Activated CD4-positive, alpha-beta T cell treated with anti-CD3 and anti-CD28 coated beads for 36 hours (primary cell): ENCODE measurements at regions of chr1 and their contacts with region 1.

Region 1: GRCh38 chr1:67766141-67766978 is 66.9 kb downstream of the GNG12 start:
- DNase-seq: peak; percentile 64
- ATAC-seq: peak; percentile 46
- H3K4me3 Mint-ChIP-seq: no peak overlapping the region
- H3K27ac Mint-ChIP-seq: no peak overlapping the region
- H3K4me1 Mint-ChIP-seq: peaks cover 12% of the 10 kb centered on the region
- H3K27me3 Mint-ChIP-seq: peaks cover 29% of the 10 kb centered on the region

Region 2: DNA sequence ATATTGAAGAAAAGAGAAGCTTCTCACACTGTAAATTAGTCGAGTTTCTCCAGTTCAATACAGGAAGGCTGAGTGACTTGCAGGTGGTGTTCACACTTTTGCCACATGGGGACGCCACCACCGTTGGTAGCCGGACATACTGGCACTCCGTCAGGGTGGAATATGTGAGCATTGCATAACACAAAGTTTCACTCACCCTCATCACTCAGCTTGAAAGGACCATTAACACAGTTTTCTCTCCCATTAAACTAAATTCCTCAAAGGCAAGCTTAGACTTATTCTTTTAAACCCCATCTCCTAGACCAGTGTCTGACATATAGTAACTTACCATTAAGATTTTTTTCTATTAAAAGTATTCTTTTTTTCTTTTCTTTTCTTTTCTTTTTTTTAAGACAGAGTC is 230.9 kb before region 1 on chr1:
- CTCF ChIA-PET with region 1: interaction called, 113 read pairs
- POLR2A ChIA-PET with region 1: no interaction called
- intact Hi-C with region 1: no loop called
- DNase-seq: peak; percentile 83
- ATAC-seq: peak; percentile 79
- H3K4me3 Mint-ChIP-seq: no peak overlapping the region
- H3K27ac Mint-ChIP-seq: no peak overlapping the region
- H3K4me1 Mint-ChIP-seq: no peaks in the 10 kb centered on the region
- H3K27me3 Mint-ChIP-seq: peaks cover 5% of the 10 kb centered on the region

Region 3: GRCh38 chr1:67723620-67724019 is 42.7 kb before region 1 on chr1:
- CTCF ChIA-PET with region 1: no interaction called
- POLR2A ChIA-PET with region 1: no interaction called
- intact Hi-C with region 1: no loop called
- DNase-seq: peak; percentile 38
- ATAC-seq: peak; percentile 93
- H3K4me3 Mint-ChIP-seq: no peak overlapping the region
- H3K27ac Mint-ChIP-seq: no peak overlapping the region
- H3K4me1 Mint-ChIP-seq: peaks cover 12% of the 10 kb centered on the region
- H3K27me3 Mint-ChIP-seq: no peaks in the 10 kb centered on the region

Region 4: GRCh38 chr1:67777440-67777839 is 11.1 kb after region 1 on chr1:
- CTCF ChIA-PET with region 1: interaction called, 24 read pairs
- POLR2A ChIA-PET with region 1: no interaction called
- intact Hi-C with region 1: no loop called
- DNase-seq: no peak
- ATAC-seq: no peak
- H3K4me3 Mint-ChIP-seq: no peak overlapping the region
- H3K27ac Mint-ChIP-seq: no peak overlapping the region
- H3K4me1 Mint-ChIP-seq: no peaks in the 10 kb centered on the region
- H3K27me3 Mint-ChIP-seq: peaks cover 20% of the 10 kb centered on the region

Region 5: DNA sequence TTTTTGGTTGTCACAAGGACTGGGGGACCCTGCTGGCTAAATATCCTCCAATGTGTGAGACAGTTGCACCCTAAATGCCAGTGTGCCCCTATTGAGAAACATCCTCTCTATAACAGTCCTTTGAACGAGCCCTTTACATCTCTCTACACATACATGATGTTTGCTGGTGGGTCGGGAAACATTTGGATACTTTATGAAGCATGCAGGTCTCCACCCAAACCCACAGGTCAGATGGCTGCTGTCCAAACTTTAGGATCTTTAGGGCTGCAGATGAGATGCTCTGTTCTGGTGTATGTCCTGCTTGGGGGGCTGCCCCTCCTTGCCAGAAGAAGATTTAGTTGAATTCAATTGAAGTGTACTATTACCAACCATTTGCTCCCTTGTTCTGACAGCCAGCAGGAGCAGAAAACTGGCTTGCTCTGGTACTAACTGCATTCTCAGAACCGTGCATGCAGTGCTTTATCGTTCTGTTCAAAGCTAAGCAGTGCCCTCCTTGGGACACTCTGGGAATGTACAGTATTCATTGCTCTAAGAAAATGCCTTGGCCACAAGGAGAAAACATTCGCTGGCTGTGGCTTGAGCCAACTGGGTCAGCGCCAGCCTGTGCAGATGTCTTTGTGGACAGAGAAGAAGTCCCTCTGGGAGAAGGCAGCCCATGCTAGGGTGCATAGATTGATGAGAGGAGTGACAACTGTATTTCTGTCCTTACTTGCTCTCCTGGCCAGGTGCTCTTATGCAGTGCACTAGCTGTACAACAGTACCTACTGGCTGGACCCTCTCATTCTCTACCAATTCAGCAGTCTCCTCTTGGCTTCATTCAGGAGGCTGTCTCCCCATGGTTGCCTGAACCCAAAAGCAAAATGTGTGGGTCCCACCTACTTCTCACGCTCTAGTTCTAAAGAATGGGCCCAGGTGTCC is 345.4 kb after region 1 on chr1:
- CTCF ChIA-PET with region 1: interaction called, 4 read pairs
- POLR2A ChIA-PET with region 1: no interaction called
- intact Hi-C with region 1: loop called (anchors 2 to 5 kb)
- DNase-seq: no peak
- ATAC-seq: no peak
- H3K4me3 Mint-ChIP-seq: no peak overlapping the region
- H3K27ac Mint-ChIP-seq: no peak overlapping the region
- H3K4me1 Mint-ChIP-seq: peaks cover 1% of the 10 kb centered on the region
- H3K27me3 Mint-ChIP-seq: peaks cover 7% of the 10 kb centered on the region

Region 6: GRCh38 chr1:68346188-68346808 is 579.9 kb after region 1 on chr1:
- CTCF ChIA-PET with region 1: no interaction called
- POLR2A ChIA-PET with region 1: no interaction called
- intact Hi-C with region 1: loop called in 1 of 2 experiments (anchors 5 kb)
- DNase-seq: no peak
- ATAC-seq: no peak
- H3K4me3 Mint-ChIP-seq: no peak overlapping the region
- H3K27ac Mint-ChIP-seq: no peak overlapping the region
- H3K4me1 Mint-ChIP-seq: no peaks in the 10 kb centered on the region
- H3K27me3 Mint-ChIP-seq: peaks cover 2% of the 10 kb centered on the region